ENCODE measurements at regions of chr16 and their contacts with region 1.

Region 1: DNA sequence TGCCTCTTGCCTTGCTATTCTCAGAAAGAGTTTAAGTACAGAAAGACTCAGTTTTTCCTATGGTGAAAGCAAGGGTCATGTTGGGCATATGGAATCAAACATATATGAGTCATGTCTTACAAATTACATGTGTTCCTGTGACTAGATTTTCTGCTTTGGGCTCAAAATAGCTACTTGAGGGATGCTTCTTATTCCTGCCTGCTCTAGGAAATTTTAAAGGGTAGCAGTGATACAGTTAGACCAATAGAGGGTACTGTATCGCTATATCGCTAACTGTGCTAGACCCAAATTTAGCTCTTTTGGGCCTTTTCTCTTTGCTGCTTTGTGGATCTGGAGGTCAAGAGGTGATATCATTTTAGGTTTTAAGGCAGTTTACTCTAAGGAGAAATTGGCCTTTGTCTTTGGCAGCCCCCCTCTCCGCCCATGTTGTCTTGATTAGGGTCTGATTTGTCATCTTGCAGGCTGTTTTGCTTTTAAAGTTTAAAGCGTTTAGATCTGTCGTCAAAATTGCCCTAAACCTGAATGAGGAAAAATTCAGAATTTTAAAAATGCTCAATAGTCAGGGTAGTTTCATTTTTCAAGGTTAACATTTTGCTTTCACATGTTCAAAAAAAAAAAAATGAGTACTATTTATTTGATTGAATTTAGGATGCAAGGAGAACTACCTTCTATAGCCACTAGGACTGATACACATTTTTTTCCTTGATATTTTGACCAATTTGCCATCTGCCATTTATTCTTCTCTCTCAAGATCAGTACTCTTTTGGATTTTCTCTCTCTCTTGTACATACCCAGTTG is 8.8 kb downstream of the NFATC3 start:
- DNase-seq: peak; percentile 62
- H3K4me3 Mint-ChIP-seq: peak overlapping the region; percentile 58
- H3K27ac Mint-ChIP-seq: peak overlapping the region; percentile 84
- H3K4me1 Mint-ChIP-seq: peaks cover 59% of the 10 kb centered on the region
- H3K27me3 Mint-ChIP-seq: no peaks in the 10 kb centered on the region

Region 2: DNA sequence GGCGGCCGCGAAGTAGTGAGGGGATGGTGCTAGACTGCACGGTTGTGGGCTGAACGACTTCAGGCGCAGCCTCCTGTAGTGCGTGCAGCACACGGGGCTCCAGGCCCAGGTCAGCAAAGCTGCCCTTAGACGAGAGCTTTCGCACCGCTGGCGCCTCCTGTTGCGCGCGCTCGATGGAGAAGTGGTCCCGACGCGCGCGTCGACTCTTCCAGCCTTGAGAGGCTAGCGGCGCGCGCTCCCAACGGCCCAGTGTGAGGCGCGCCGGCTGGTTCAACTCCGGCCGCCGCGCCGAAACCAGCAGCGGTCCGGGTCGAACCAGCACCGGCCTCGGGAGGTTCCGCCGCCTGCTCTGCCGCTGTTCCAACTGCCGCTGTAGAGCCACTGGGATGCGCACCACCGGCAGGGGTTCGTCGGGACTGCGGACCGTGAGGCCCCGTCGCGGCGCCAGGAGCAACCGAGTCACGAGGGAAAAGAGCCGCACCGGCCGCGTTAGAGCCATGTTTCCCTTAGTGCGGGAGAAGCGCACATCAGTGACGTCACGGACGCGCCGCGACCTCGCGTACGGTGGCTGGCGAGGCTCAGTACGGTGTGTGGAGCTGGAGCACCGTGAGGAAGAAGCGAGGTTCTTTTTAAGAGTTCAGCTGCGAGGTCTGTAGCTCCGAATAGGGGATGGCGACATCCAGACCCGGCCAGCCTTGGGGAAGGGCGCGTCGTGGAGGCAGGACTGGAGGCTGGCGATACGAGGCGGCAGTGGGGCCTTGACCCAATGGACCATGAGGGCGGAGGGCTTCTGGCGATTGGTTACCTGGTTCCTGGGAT is 71.1 kb before region 1 on chr16 and contains the starts of genes DDX28 and DUS2:
- intact Hi-C with region 1: no loop called
- DNase-seq: peak; percentile 99
- H3K4me3 Mint-ChIP-seq: peak within 1 kb of the TSS; percentile 95
- H3K27ac Mint-ChIP-seq: peak within 1 kb of the TSS; percentile 96
- H3K4me1 Mint-ChIP-seq: peaks cover 22% of the 10 kb centered on the region
- H3K27me3 Mint-ChIP-seq: no peaks in the 10 kb centered on the region
- total RNA-seq, gene DDX28: 23.9 and 26.1 TPM in 2 replicates
- total RNA-seq, gene DUS2: 35.3 and 42.6 TPM in 2 replicates

Region 3: GRCh38 chr16:68116256-68116867 is 22.3 kb after region 1 on chr16:
- intact Hi-C with region 1: loop called (anchors 1 kb)
- DNase-seq: peak; percentile 64
- H3K4me3 Mint-ChIP-seq: no peak overlapping the region
- H3K27ac Mint-ChIP-seq: no peak overlapping the region
- H3K4me1 Mint-ChIP-seq: peaks cover 49% of the 10 kb centered on the region
- H3K27me3 Mint-ChIP-seq: no peaks in the 10 kb centered on the region

Region 4: DNA sequence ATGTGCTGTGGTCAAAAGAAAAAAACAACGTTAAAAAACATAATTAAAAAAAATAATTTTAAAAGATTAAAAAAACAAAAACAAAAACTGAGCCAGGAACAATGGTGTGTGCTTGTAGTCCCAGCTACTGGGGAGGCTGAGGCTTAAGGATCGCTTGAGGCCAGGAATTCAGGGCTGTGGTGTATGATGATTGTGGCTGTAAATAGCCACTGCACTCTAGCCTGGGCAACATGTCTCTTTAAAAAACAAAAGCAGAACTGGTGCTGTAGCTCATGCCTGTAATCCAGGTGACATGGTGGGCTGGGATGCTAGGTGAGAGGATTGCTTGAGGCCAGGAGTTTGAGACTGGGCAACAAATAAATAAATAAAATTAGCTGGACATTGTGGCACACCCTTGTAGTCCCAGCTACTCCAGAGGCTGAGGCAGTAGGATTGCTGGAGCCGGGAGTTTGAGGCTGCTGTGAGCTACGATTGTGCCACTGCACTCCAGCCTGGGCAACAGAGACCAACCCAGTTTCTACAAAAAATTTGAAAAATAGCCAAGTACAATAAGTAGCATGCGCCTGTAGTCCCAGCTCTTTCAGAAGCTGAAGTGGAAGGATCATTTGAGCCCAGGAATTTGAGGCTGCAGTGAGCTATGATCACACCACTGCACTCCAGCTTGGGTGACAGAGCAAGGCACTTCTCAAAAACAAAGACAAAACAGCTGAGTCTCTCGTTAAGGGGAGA is 34.7 kb after region 1 on chr16:
- intact Hi-C with region 1: no loop called
- DNase-seq: no peak
- H3K4me3 Mint-ChIP-seq: no peak overlapping the region
- H3K27ac Mint-ChIP-seq: no peak overlapping the region
- H3K4me1 Mint-ChIP-seq: peaks cover 37% of the 10 kb centered on the region
- H3K27me3 Mint-ChIP-seq: no peaks in the 10 kb centered on the region

Region 5: GRCh38 chr16:68146585-68146984 is 52.6 kb after region 1 on chr16:
- intact Hi-C with region 1: loop called (anchors 10 kb)
- DNase-seq: no peak
- H3K4me3 Mint-ChIP-seq: no peak overlapping the region
- H3K27ac Mint-ChIP-seq: no peak overlapping the region
- H3K4me1 Mint-ChIP-seq: peaks cover 25% of the 10 kb centered on the region
- H3K27me3 Mint-ChIP-seq: no peaks in the 10 kb centered on the region

Region 6: DNA sequence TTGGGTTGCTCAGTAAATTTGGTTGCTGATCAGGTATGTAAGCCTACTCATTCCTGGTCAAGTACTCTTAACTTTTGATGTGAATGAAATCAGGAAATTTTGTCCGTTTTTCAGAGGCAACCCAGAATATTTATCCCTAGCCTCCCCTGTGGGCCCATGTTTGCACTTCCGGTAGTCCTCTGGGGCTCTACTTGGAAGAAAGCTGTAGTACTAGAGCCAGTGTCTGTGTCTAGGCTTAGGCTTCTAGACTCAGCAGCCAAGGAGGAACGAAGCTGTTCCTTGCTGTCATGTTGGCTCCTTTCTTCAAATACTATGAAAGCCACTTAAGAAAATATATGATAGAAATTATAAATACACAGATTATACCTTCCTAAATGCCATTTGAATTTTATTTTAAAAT is 120.7 kb after region 1 on chr16:
- intact Hi-C with region 1: loop called (anchors 5 kb)
- DNase-seq: no peak
- H3K4me3 Mint-ChIP-seq: no peak overlapping the region
- H3K27ac Mint-ChIP-seq: peak overlapping the region; percentile 72
- H3K4me1 Mint-ChIP-seq: peaks cover 38% of the 10 kb centered on the region
- H3K27me3 Mint-ChIP-seq: no peaks in the 10 kb centered on the region

Region 7: DNA sequence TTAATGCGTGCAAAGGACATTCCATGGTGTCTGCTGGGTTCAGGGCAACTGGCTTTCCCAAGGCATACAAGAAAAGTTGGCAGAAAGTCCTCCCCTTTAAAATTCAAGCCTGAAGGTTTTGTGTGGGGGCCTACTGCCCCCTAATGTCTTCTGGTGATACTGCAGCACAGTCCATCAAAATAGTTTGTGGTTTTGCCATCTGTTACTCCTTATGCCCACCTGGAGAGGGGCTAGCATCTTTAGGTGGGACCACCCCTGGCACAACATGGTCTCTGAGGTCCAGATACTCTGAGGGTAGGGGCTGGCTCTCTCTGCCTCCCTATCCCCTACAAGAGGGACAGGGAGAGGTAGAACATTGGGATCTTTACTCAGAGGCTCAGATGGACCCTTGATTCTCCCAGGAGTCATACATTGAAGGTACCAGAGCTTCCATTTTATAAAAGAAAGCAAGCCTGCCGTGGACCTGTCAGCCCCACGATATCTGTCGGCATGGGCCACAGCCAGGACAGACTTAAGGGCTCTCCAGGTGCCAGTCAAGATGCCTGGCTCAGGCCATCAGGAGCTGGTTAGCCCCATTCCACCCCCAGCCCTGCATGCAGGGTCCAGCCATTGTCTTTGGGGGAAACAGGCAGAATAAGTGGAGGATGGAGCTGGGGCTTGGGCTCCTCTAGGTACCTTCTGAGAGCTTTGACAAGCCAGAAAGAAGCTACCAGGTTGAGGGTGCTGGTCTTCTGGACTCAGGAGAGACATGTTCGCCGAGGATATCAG is 135.6 kb after region 1 on chr16:
- intact Hi-C with region 1: loop called (anchors 5 kb)
- DNase-seq: peak; percentile 84
- H3K4me3 Mint-ChIP-seq: peak overlapping the region; percentile 37
- H3K27ac Mint-ChIP-seq: peak overlapping the region; percentile 34
- H3K4me1 Mint-ChIP-seq: peaks cover 43% of the 10 kb centered on the region
- H3K27me3 Mint-ChIP-seq: no peaks in the 10 kb centered on the region

Measured in activated CD4-positive, alpha-beta T cell treated with anti-CD3 and anti-CD28 coated beads, Interleukin-2, amount 10 ng/mL, durations not matched to agents 24 days and 14 days (primary cell).